ENCODE measurements at regions of chr3 and their contacts with region 1.

Region 1: DNA sequence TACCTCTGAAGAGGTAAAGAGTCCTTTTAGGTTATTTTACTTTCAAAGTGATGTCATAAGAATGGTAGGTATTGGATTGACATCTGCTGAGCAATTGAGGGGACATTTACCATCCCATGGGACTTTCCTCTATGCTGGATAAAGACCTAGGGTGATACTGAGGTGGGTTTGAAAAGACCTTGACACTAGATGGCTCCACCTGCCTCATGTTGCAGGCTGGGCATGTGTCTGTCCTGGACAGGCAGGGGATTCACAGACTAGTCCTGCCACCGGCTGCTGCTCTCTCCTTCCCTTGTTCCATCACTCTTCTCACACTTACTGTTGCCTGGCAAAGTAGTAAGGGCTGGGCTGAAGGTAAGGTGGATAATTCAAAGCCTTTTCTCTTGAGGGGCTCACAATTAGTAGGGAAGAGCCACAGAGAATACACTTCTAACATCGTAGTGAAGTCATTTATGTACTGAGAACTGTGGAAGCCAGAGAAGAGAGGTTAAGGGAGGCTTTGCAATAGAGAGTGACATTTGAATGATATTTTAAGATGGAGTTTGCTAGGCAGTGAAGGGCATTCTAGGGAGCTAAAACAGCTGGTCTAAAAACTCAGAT is 27.7 kb downstream of the TRAK1 start:
- DNase-seq: no peak
- ATAC-seq: no peak
- H3K4me3 ChIP-seq: no peak overlapping the region
- H3K27ac ChIP-seq: no peak overlapping the region
- H3K4me1 ChIP-seq: no peaks in the 10 kb centered on the region
- H3K27me3 ChIP-seq: no peaks in the 10 kb centered on the region

Region 2: GRCh38 chr3:42179110-42179725 is 60.4 kb after region 1 on chr3:
- intact Hi-C with region 1: loop called in 1 of 2 experiments (anchors 5 kb)
- DNase-seq: no peak
- ATAC-seq: peak; percentile 81
- H3K4me3 ChIP-seq: no peak overlapping the region
- H3K27ac ChIP-seq: peak overlapping the region in 1 of 2 donors; percentile 82
- H3K4me1 ChIP-seq: peaks cover 0 to 2% of the 10 kb centered on the region in 2 donors
- H3K27me3 ChIP-seq: no peaks in the 10 kb centered on the region

Region 3: GRCh38 chr3:42184651-42185443 is 66.0 kb after region 1 on chr3:
- intact Hi-C with region 1: loop called (anchors 2 to 5 kb)
- DNase-seq: peak in 1 of 2 donors; percentile 76
- ATAC-seq: peak; percentile 15
- H3K4me3 ChIP-seq: no peak overlapping the region
- H3K27ac ChIP-seq: no peak overlapping the region
- H3K4me1 ChIP-seq: no peaks in the 10 kb centered on the region
- H3K27me3 ChIP-seq: no peaks in the 10 kb centered on the region

Region 4: GRCh38 chr3:42190701-42191462 is 72.0 kb after region 1 on chr3:
- intact Hi-C with region 1: loop called (anchors 2 to 5 kb)
- DNase-seq: peak; percentile 48 to 68
- ATAC-seq: peak; percentile 58
- H3K4me3 ChIP-seq: no peak overlapping the region
- H3K27ac ChIP-seq: no peak overlapping the region
- H3K4me1 ChIP-seq: no peaks in the 10 kb centered on the region
- H3K27me3 ChIP-seq: no peaks in the 10 kb centered on the region